GM12878 (cell line): ENCODE measurements at regions of chrX and their contacts with region 1.

Region 1: DNA sequence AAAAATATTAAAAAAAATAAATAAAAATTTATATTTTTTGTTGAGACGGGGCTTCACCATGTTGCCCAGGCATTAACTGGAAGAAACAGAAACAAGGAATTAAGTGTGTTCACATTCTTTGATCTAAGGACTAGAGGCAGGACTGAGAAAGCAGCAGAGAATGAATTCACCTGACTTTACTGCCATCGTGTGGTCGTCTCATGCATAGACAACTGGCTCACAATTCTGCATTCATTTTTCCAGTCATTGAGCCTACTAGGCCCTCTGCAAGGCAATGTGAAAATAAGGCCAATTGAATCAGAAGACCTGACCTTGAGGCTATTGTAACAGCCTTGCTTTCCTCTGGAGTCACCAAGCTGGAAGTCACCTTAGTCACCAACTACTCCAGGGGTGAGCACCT is 37.4 kb downstream of the LHFPL1 start:
- DNase-seq: no peak
- ATAC-seq: peak; percentile 24
- H3K4me3 ChIP-seq: no peak overlapping the region
- H3K27ac ChIP-seq: no peak overlapping the region
- H3K4me1 ChIP-seq: peaks cover 9% of the 10 kb centered on the region
- H3K27me3 ChIP-seq: no peaks in the 10 kb centered on the region
- CTCF ChIP-seq: peak; percentile 62 to 80 (median 64)
- EP300 ChIP-seq: no peak
- POLR2A ChIP-seq: no peak
- RAD21 ChIP-seq: peak; percentile 82

Region 2: DNA sequence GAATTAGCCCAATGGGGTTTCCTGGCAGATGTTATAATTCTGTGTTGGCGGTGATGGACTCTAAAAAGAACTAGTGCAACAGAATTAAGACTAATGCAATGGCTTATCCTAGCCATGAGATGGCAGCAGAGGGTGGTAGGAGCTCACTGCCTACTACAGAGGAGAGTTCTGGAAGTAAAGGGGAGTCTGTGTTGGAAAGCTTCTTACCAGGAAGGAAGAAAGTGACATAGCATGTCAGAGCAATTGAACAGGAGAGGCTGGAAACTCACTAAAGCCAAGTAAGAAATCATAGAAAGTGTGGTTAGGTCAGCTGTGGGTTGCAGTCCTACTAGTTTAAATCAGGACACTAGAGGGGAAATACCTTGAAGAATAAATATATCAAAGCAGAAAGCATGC is 772.7 kb before region 1 on chrX:
- CTCF ChIA-PET with region 1: interaction called, 9 read pairs
- POLR2A ChIA-PET with region 1: no interaction called
- RAD21 ChIA-PET with region 1: no interaction called
- SMC1A ChIA-PET with region 1: interaction called, 9 read pairs
- in situ Hi-C with region 1: loop called (anchors 25 kb)
- intact Hi-C with region 1: loop called (anchors 1 kb)
- DNase-seq: peak; percentile 19
- ATAC-seq: peak; percentile 92
- H3K4me3 ChIP-seq: no peak overlapping the region
- H3K27ac ChIP-seq: no peak overlapping the region
- H3K4me1 ChIP-seq: peaks cover 6% of the 10 kb centered on the region; the same call in 1 of the 2 replicates
- H3K27me3 ChIP-seq: no peaks in the 10 kb centered on the region
- CTCF ChIP-seq: peak; percentile 65 to 76 (median 70)
- EP300 ChIP-seq: no peak
- POLR2A ChIP-seq: no peak
- RAD21 ChIP-seq: peak; percentile 76

Region 3: GRCh38 chrX:112668476-112669409 is 26.4 kb after region 1 on chrX:
- CTCF ChIA-PET with region 1: interaction called, 11 read pairs
- POLR2A ChIA-PET with region 1: interaction called, 6 read pairs
- RAD21 ChIA-PET with region 1: interaction called, 6 read pairs
- SMC1A ChIA-PET with region 1: interaction called, 13 read pairs
- in situ Hi-C with region 1: no loop called
- intact Hi-C with region 1: loop called (anchors 1 kb)
- DNase-seq: no peak
- ATAC-seq: peak; percentile 53
- H3K4me3 ChIP-seq: peak overlapping the region; percentile 32; the same call in 1 of the 2 replicates
- H3K27ac ChIP-seq: peak overlapping the region; percentile 62
- H3K4me1 ChIP-seq: peaks cover 27% of the 10 kb centered on the region
- H3K27me3 ChIP-seq: no peaks in the 10 kb centered on the region
- CTCF ChIP-seq: no peak
- EP300 ChIP-seq: no peak
- POLR2A ChIP-seq: no peak
- RAD21 ChIP-seq: no peak

Region 4: DNA sequence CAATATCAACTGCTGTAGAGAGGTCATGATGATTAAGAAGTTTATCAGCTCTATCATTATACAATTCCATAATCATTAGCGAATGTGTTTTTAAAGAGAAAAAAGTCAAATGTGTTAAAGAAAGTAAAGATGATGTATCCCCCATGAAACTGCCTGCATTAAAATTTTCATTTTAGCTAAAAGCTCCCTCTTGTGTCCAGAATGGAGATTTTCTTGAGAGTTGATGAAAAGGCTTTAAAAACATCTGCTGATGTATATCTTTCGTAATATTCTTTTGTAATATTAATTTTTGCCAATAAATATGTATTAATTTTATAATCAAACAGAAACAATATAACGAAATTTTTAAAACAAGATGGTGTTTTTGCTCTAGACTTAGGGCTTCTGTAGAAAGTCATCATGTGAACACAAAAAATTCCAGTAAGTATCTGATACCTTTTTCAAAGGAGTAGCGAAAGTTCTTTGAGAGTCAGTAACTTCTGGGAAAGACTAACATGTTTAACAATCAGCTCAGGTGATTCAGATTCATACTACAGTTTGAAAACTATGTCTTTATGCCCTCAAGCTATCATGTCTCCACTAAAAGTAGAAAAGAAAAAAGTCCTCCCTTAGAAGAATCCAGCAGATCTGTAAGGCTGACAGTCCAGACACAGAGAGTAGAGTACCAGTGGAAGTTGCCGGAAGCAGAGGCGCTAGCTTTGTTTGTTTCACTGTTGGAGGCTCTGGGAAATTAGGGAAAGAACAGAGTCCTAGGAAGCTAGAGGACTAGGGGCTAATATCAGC is 89.6 kb after region 1 on chrX:
- CTCF ChIA-PET with region 1: interaction called, 3 read pairs
- POLR2A ChIA-PET with region 1: no interaction called
- RAD21 ChIA-PET with region 1: interaction called, 4 read pairs
- SMC1A ChIA-PET with region 1: interaction called, 4 read pairs
- in situ Hi-C with region 1: no loop called
- intact Hi-C with region 1: loop called (anchors 2 kb)
- DNase-seq: no peak
- ATAC-seq: peak; percentile 56
- H3K4me3 ChIP-seq: no peak overlapping the region
- H3K27ac ChIP-seq: no peak overlapping the region
- H3K4me1 ChIP-seq: no peaks in the 10 kb centered on the region; the same call in 1 of the 2 replicates
- H3K27me3 ChIP-seq: no peaks in the 10 kb centered on the region
- CTCF ChIP-seq: peak; percentile 19 to 33 (median 22); a peak in 3 of 6 replicates
- EP300 ChIP-seq: no peak
- POLR2A ChIP-seq: no peak
- RAD21 ChIP-seq: peak; percentile 71

Region 5: DNA sequence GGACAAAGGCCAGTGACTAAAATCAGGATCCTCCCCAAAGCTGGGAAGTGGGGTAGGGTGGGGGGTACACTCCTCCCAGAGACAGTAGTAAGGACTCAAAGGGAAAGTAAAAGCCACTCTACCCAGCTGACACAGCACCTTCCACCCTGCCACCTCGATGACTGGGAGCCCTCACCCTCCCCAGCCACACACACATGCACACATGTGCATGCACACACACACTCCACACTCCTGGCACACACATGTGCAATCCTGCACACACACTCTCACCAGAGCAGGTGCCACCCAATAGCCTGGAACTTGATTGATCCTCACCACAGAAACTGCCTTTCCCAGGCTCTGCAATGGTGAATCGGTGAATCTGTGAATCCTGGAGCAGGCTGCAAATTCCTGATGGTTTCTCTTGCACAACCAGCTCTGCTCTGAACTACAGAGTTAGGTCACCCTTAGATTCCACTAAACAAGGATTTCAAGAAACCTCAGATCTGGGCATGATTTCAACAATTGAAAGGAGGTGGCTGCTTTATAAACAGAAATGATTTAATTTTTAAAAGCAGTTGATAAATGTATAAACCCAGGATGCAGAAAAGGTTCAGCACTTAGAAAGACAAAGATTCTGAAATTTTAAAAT is 176.8 kb after region 1 on chrX:
- CTCF ChIA-PET with region 1: no interaction called
- POLR2A ChIA-PET with region 1: no interaction called
- RAD21 ChIA-PET with region 1: no interaction called
- SMC1A ChIA-PET with region 1: no interaction called
- in situ Hi-C with region 1: no loop called
- intact Hi-C with region 1: no loop called
- DNase-seq: no peak
- ATAC-seq: no peak; the same call in 2 of the 3 replicates
- H3K4me3 ChIP-seq: no peak overlapping the region
- H3K27ac ChIP-seq: no peak overlapping the region
- H3K4me1 ChIP-seq: no peaks in the 10 kb centered on the region
- H3K27me3 ChIP-seq: no peaks in the 10 kb centered on the region
- CTCF ChIP-seq: no peak
- EP300 ChIP-seq: no peak
- POLR2A ChIP-seq: no peak
- RAD21 ChIP-seq: no peak

Region 6: GRCh38 chrX:112841114-112841819 is 198.9 kb after region 1 on chrX:
- CTCF ChIA-PET with region 1: no interaction called
- POLR2A ChIA-PET with region 1: no interaction called
- RAD21 ChIA-PET with region 1: no interaction called
- SMC1A ChIA-PET with region 1: no interaction called
- in situ Hi-C with region 1: loop called (anchors 10 kb)
- intact Hi-C with region 1: no loop called
- DNase-seq: no peak
- ATAC-seq: peak; percentile 95
- H3K4me3 ChIP-seq: peak overlapping the region; percentile 80
- H3K27ac ChIP-seq: peak overlapping the region; percentile 35; the same call in 1 of the 2 replicates
- H3K4me1 ChIP-seq: no peaks in the 10 kb centered on the region; the same call in 1 of the 2 replicates
- H3K27me3 ChIP-seq: no peaks in the 10 kb centered on the region
- CTCF ChIP-seq: no peak
- EP300 ChIP-seq: no peak
- POLR2A ChIP-seq: no peak
- RAD21 ChIP-seq: no peak

Region 7: GRCh38 chrX:113973706-113974105 is 1331.4 kb after region 1 on chrX:
- CTCF ChIA-PET with region 1: no interaction called
- POLR2A ChIA-PET with region 1: no interaction called
- RAD21 ChIA-PET with region 1: no interaction called
- SMC1A ChIA-PET with region 1: no interaction called
- in situ Hi-C with region 1: no loop called
- intact Hi-C with region 1: no loop called
- DNase-seq: no peak
- ATAC-seq: no peak
- H3K4me3 ChIP-seq: no peak overlapping the region
- H3K27ac ChIP-seq: no peak overlapping the region
- H3K4me1 ChIP-seq: no peaks in the 10 kb centered on the region
- H3K27me3 ChIP-seq: no peaks in the 10 kb centered on the region
- CTCF ChIP-seq: no peak
- EP300 ChIP-seq: no peak
- POLR2A ChIP-seq: no peak
- RAD21 ChIP-seq: no peak